Right cardiac atrium (tissue), 5 donors: ENCODE measurements at regions of chrX and their contacts with region 1.

Region 1: DNA sequence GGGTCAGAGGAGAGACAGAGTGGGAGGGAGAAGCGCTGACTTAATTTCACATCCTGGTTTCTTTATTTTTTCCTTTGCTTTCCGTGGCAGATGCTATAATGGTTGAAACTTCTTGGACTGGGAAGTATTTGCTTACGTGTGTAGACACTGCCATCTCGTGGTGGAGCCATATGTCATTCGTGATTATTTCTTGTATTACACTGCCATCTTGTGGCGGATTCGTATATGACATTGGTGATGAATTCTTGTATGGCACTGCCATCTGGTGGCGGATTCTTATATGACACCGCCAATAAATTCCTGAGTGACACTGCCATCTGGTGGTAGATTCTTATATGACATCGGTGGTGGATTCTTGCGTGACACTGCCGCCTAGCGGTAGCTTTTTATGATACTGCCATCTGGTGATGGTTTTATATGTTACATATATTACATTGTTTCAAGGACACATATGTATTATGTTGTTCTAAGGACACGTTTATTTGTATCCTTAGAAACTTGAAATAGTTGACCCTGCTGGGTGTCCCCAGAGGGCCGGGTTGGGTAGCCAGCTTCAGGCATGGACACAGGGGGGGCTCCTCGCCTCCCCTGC is 37.3 kb upstream of the CLCN4 start:
- DNase-seq: peak in 2 of 3 donors; percentile 46 to 61
- ATAC-seq: peak; percentile 49 to 66
- H3K4me3 ChIP-seq: no peak overlapping the region
- H3K27ac ChIP-seq: no peak overlapping the region
- H3K4me1 ChIP-seq: no peaks in the 10 kb centered on the region
- H3K27me3 ChIP-seq: no peaks in the 10 kb centered on the region

Region 2: GRCh38 chrX:9885150-9885549 is 234.3 kb before region 1 on chrX:
- intact Hi-C with region 1: loop called in 1 of 4 experiments (anchors 5 kb)
- DNase-seq: peak; percentile 49 to 82 (median 79)
- ATAC-seq: peak; percentile 52 to 55
- H3K4me3 ChIP-seq: no peak overlapping the region
- H3K27ac ChIP-seq: no peak overlapping the region
- H3K4me1 ChIP-seq: peaks cover 2% of the 10 kb centered on the region
- H3K27me3 ChIP-seq: no peaks in the 10 kb centered on the region

Region 3: DNA sequence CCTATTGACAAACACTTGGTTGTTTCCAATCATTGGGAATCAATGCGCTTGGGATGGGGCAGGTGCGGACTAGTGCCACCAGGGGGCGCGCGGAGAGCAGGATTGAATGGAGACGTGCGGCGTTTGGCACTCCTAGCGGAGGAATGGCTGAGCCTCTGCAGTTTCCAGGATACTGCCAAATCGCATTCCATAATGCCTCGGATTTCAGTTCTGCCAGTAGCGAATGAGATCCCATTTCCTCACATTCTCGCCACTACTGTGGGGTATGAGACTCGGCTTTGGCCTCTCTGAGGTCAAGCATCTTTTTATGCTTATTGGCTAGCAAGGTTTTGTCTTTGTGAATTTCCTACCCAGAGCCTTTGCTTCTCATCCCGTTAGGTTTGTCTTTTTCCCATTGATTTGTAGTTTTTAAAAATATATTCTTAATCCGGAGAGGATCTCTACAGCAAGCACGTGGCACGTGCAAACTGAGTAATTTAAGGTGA is 123.6 kb before region 1 on chrX:
- intact Hi-C with region 1: loop called (anchors 1 to 5 kb)
- DNase-seq: peak; percentile 84 to 93 (median 91)
- ATAC-seq: peak; percentile 89 to 93
- H3K4me3 ChIP-seq: no peak overlapping the region
- H3K27ac ChIP-seq: no peak overlapping the region
- H3K4me1 ChIP-seq: no peaks in the 10 kb centered on the region
- H3K27me3 ChIP-seq: no peaks in the 10 kb centered on the region